Activated T-helper 1 cell treated with anti-CD3 and anti-CD28 coated beads, Interleukin-12 subunit alpha, Interleukin-12 subunit beta, Interleukin-2, Interleukin-4 antibody, amounts not matched to agents 30 ng/mL and 10 ng/mL and 1 ng/mL, durations not matched to agents 14 hours and 24 hours and 36 hours (primary cell): ENCODE measurements at regions of chr1 and their contacts with region 1.

Region 1: GRCh38 chr1:45583264-45583665 is 576 bp upstream of the NASP start:
- DNase-seq: peak; percentile 93
- H3K4me3 Mint-ChIP-seq: peak overlapping the region; percentile 100
- H3K27ac Mint-ChIP-seq: peak overlapping the region; percentile 98
- H3K4me1 Mint-ChIP-seq: peaks cover 29% of the 10 kb centered on the region
- H3K27me3 Mint-ChIP-seq: no peaks in the 10 kb centered on the region

Region 2: GRCh38 chr1:44730741-44731512 is 852.3 kb before region 1 on chr1 and contains the start of gene RNU5D-1:
- intact Hi-C with region 1: loop called (anchors 10 kb)
- DNase-seq: peak; percentile 87
- H3K4me3 Mint-ChIP-seq: peak within 1 kb of the TSS; percentile 60
- H3K27ac Mint-ChIP-seq: peak within 1 kb of the TSS; percentile 100
- H3K4me1 Mint-ChIP-seq: peaks cover 35% of the 10 kb centered on the region
- H3K27me3 Mint-ChIP-seq: peaks cover 3% of the 10 kb centered on the region
- total RNA-seq, gene RNU5D-1: not detected in 2 replicates

Region 3: DNA sequence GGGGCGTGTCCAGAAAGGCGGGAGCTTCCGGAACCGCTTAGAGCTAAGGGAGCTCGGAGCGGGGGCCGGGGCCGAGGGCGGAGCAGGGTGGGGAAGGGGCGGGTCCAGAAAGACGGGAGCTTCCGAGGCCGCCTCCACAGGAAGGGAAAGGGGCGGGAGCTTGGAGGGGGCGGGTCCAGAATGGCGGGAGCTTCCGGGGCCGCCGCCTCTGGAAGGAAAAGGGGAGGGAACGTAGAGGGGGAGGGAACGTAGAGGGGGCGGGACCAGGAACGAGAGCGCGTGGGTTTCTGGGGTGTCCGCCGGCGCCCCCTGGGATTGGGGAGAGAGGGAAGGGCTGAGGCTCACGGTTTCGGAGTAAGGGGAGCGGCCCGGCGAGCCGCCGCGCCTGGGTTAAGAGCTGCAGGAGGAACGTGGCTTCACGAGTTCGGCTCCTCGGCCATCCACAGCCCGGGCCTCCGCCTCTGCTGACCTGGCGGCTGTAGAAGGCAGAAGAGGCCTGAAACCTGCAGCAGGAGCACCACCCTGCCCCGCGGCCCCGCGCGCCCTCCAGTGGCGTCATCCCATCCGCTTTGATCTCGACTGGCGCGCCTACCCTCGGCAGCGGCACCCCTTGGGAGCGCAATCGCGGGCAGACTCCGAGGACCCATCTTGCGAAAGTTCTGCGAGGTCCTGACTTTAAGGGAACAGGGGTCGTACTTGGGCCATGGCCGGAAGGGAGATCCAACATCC is 279.5 kb before region 1 on chr1:
- intact Hi-C with region 1: loop called (anchors 1 kb)
- DNase-seq: peak; percentile 87
- H3K4me3 Mint-ChIP-seq: peak overlapping the region; percentile 92
- H3K27ac Mint-ChIP-seq: peak overlapping the region; percentile 93
- H3K4me1 Mint-ChIP-seq: peaks cover 50% of the 10 kb centered on the region
- H3K27me3 Mint-ChIP-seq: no peaks in the 10 kb centered on the region

Region 4: GRCh38 chr1:45465277-45465676 is 118.0 kb before region 1 on chr1:
- intact Hi-C with region 1: no loop called
- DNase-seq: no peak
- H3K4me3 Mint-ChIP-seq: no peak overlapping the region
- H3K27ac Mint-ChIP-seq: no peak overlapping the region
- H3K4me1 Mint-ChIP-seq: no peaks in the 10 kb centered on the region
- H3K27me3 Mint-ChIP-seq: no peaks in the 10 kb centered on the region

Region 5: GRCh38 chr1:45499415-45499769 is 83.9 kb before region 1 on chr1:
- intact Hi-C with region 1: loop called (anchors 1 kb)
- DNase-seq: no peak
- H3K4me3 Mint-ChIP-seq: peak overlapping the region; percentile 93
- H3K27ac Mint-ChIP-seq: peak overlapping the region; percentile 83
- H3K4me1 Mint-ChIP-seq: peaks cover 37% of the 10 kb centered on the region
- H3K27me3 Mint-ChIP-seq: no peaks in the 10 kb centered on the region

Region 6: GRCh38 chr1:45550401-45551351 is 32.6 kb before region 1 on chr1 and contains the start of gene AKR1A1:
- intact Hi-C with region 1: loop called (anchors 1 kb)
- DNase-seq: peak; percentile 85
- H3K4me3 Mint-ChIP-seq: peak within 1 kb of the TSS; percentile 93
- H3K27ac Mint-ChIP-seq: peak within 1 kb of the TSS; percentile 92
- H3K4me1 Mint-ChIP-seq: peaks cover 29% of the 10 kb centered on the region
- H3K27me3 Mint-ChIP-seq: peaks cover 5% of the 10 kb centered on the region
- total RNA-seq, gene AKR1A1: 192 and 194 TPM in 2 replicates

Region 7: GRCh38 chr1:45803301-45803780 is 220.1 kb after region 1 on chr1 and contains the start of gene MAST2:
- intact Hi-C with region 1: loop called (anchors 1 kb)
- DNase-seq: peak; percentile 87
- H3K4me3 Mint-ChIP-seq: peak within 1 kb of the TSS; percentile 99
- H3K27ac Mint-ChIP-seq: peak within 1 kb of the TSS; percentile 93
- H3K4me1 Mint-ChIP-seq: peaks cover 32% of the 10 kb centered on the region
- H3K27me3 Mint-ChIP-seq: no peaks in the 10 kb centered on the region
- total RNA-seq, gene MAST2: 32.0 and 37.2 TPM in 2 replicates

Region 8: DNA sequence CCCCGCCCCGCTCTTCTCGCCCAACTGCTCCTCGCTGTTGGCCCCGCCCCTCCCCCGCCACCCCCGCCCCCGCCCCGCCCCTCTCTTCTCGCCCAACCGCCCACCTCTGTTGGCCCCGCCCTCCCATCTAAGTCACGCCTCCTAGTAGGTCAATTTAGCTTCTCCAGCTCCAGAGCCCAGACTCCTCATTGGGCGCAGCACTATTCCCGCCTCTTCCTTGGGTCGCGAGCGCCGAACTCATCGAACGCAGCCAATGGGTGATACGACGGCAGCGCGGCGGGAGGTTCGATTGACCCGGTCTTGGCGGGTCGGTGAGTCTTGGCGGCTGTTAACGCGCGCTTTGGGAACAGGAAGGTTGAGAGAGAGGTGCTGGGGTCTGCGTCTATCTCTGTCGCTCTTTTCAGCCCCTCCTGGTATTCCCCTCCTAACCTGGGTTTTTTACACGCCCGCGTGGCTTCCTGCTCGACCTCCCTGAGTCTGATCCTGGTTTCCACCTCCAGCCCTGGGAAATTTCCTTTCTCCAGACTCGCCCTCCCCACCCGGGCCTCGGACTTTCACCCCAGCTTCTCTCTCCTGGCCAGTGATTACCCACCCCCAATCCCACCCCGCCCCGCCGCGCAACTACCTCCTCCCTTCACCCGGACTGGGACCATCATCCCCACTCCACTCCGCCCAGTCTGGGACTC is 664.3 kb after region 1 on chr1 and contains the start of gene RAD54L:
- intact Hi-C with region 1: loop called (anchors 2 kb)
- DNase-seq: peak; percentile 95
- H3K4me3 Mint-ChIP-seq: peak within 1 kb of the TSS; percentile 97
- H3K27ac Mint-ChIP-seq: peak within 1 kb of the TSS; percentile 94
- H3K4me1 Mint-ChIP-seq: peaks cover 39% of the 10 kb centered on the region
- H3K27me3 Mint-ChIP-seq: no peaks in the 10 kb centered on the region
- total RNA-seq, gene RAD54L: 49.7 and 50.2 TPM in 2 replicates